BJ (cell line): ENCODE measurements at regions of chr11 and their contacts with region 1.

Region 1: DNA sequence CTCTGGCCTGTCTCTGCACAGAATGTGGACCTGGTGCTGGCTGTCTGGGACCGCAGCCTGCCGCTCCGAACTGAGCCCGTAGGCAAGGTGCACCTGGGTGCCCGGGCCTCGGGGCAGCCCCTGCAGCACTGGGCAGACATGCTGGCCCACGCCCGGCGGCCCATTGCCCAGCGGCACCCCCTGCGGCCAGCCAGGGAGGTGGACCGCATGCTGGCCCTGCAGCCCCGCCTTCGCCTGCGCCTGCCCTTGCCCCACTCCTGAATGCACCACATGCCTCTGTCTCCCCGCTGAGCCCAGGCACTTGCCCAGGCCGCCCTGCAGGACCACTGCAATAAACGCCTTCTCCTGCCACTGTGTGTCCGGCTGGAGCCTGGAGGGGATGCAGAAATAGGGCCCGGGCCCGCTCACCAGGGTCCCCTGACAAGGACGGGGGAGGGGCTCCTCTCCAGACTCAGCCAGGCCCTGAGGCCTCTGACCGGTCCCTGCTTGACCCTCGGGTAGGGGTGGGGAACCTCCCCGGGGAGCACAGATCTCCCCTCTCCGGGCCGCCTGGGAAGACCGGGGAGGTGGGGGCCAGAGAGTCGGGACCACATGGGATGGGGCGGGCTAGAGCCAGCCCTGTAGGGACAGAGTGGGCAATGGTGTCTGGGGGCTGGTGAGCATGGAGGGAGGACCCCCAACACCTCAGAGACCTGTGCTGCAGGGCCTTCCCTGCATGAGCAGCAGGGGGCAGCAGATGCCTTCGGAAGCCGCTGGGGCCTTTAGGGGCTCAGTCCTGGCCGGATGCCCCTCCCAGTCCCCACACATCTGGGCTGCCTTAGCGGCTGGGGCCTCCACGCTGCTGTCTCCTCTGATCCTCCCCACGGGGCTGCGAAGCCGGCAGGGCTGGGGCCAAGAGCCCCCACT is 1.4 kb upstream of the TNNI2 start:
- DNase-seq: no peak
- H3K4me3 ChIP-seq: no peak overlapping the region
- H3K27me3 ChIP-seq: no peaks in the 10 kb centered on the region; the same call in 1 of the 2 replicates
- CTCF ChIP-seq: peak; percentile 93

Region 2: GRCh38 chr11:1796413-1797011 is 40.9 kb before region 1 on chr11:
- CTCF ChIA-PET with region 1: no interaction called
- POLR2A ChIA-PET with region 1: no interaction called
- DNase-seq: no peak
- H3K4me3 ChIP-seq: no peak overlapping the region
- H3K27me3 ChIP-seq: peaks cover 7% of the 10 kb centered on the region; the same call in 1 of the 2 replicates
- CTCF ChIP-seq: no peak

Region 3: DNA sequence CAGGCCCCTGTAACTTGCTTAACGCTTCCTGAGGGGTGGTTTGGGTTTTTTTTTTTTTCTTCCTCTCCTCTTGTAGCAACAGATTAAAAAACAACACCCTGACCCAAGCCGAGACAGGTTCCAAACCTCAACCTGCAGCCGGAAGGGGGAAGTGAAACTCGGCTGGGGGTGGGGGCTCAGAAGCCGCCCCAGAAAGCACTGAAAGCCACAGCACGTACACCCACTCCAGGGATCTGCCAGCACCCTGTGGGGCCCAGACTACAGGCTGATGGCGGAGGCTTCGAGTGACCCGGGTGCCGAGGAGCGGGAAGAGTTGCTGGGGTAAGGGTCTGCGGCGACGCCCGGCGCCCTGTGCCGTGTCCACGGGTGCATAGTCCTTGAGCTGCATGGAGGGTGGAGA is 15.5 kb after region 1 on chr11 and contains the start of gene LSP1:
- CTCF ChIA-PET with region 1: interaction called, 62 read pairs
- POLR2A ChIA-PET with region 1: interaction called, 3 read pairs
- DNase-seq: no peak
- H3K4me3 ChIP-seq: no peak within 1 kb of the TSS
- H3K27me3 ChIP-seq: no peaks in the 10 kb centered on the region; the same call in none of the 2 replicates
- CTCF ChIP-seq: no peak
- polyA plus RNA-seq, gene LSP1: not detected in 2 replicates

Region 4: GRCh38 chr11:2812371-2812991 is 975.1 kb after region 1 on chr11:
- CTCF ChIA-PET with region 1: no interaction called
- POLR2A ChIA-PET with region 1: no interaction called
- DNase-seq: no peak
- H3K4me3 ChIP-seq: no peak overlapping the region
- H3K27me3 ChIP-seq: peaks cover 24% of the 10 kb centered on the region
- CTCF ChIP-seq: no peak